Activated T-helper 2 cell treated with anti-CD3 and anti-CD28 coated beads, Interferon-gamma antibody, Interleukin-2, Interleukin-4, amounts not matched to agents 10 μg/mL and 5 μg/mL and 100 μg/mL, durations not matched to agents 14 hours and 24 hours and 36 hours (primary cell): ENCODE measurements at regions of chr16 and their contacts with region 1.

Region 1: GRCh38 chr16:57300387-57301125 is 16.1 kb upstream of the PLLP start:
- DNase-seq: peak; percentile 99
- H3K4me3 Mint-ChIP-seq: no peak overlapping the region
- H3K27ac Mint-ChIP-seq: no peak overlapping the region
- H3K4me1 Mint-ChIP-seq: peaks cover 16% of the 10 kb centered on the region
- H3K27me3 Mint-ChIP-seq: peaks cover 2% of the 10 kb centered on the region

Region 2: GRCh38 chr16:57185944-57186871 is 114.3 kb before region 1 on chr16 and contains the starts of genes PSME3IP1 and RSPRY1:
- intact Hi-C with region 1: loop called (anchors 5 kb)
- DNase-seq: peak; percentile 99
- H3K4me3 Mint-ChIP-seq: peak within 1 kb of the TSS; percentile 98
- H3K27ac Mint-ChIP-seq: peak within 1 kb of the TSS; percentile 96
- H3K4me1 Mint-ChIP-seq: peaks cover 36% of the 10 kb centered on the region
- H3K27me3 Mint-ChIP-seq: no peaks in the 10 kb centered on the region
- total RNA-seq, gene PSME3IP1: 109 and 125 TPM in 2 replicates
- total RNA-seq, gene RSPRY1: 33.3 and 43.0 TPM in 2 replicates

Region 3: DNA sequence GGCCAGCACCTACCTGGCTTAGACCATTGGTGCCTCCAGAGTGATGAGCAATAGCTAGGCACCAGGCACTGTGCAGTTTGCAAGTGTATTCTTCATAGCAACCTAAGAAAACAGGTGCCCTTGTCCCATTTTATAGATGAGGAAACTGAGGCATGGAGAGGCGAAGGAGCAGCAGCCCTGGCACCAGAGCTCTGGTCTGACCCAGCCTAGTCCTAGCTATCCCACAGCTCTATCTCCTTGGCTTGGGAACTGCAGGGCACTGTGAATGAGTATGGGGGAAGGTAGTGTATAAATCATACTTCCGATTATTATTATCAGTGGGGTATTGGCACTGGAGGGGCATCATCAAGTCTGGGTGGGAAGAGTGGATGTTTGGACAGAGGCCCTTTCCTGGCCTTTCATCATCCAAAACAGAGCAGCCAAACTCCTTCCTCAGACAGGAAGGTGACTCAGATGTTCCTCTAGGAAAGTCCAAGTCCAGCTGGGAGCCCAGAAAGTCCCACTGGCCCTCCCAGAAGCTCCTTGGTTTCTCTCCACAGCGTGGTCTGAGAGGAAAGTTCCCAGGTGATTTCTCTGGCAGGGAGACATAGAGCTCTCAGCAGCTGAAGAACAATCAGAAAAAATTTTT is 15.9 kb after region 1 on chr16:
- intact Hi-C with region 1: no loop called
- DNase-seq: no peak
- H3K4me3 Mint-ChIP-seq: no peak overlapping the region
- H3K27ac Mint-ChIP-seq: no peak overlapping the region
- H3K4me1 Mint-ChIP-seq: peaks cover 14% of the 10 kb centered on the region
- H3K27me3 Mint-ChIP-seq: peaks cover 3% of the 10 kb centered on the region

Region 4: DNA sequence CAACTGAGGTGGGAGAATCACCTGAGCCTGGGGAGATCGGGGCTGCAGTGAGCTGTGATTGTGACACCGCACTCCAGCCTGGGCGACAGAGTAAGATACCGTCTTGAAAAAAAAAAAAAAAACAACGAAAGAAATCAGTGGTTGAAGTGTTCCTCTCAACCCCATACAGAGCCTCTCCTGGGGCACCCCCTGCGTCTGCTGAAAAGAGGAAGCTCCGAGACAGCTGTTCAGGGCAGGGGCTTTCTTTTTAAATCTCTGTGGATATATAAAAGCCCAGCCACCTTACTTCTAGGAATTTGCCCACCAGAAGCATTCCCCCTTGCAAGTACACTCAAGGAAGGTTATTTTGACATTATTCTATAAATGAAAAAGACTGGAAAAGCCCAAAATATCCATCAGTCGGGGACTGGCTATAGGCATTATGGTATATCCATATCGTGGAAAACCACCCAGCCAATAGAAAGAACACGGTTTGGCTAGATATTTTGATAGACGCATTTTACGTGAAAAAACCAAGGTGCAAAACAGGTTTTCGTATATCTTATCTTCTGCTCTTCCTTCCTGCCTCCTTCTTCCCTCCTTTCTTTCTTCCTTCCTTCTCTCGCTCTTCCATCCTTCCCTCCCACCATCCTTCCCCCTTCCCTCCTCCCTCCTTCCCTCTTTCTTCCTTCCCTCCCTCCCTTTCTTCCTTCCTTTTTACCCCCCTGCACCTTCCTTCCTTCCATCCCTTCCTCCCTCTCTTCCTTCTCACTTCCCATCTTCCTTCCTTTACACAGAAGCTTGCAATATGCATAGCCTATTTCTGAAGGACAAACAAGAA is 48.9 kb after region 1 on chr16:
- intact Hi-C with region 1: no loop called
- DNase-seq: no peak
- H3K4me3 Mint-ChIP-seq: no peak overlapping the region
- H3K27ac Mint-ChIP-seq: no peak overlapping the region
- H3K4me1 Mint-ChIP-seq: peaks cover 10% of the 10 kb centered on the region
- H3K27me3 Mint-ChIP-seq: peaks cover 42% of the 10 kb centered on the region

Region 5: DNA sequence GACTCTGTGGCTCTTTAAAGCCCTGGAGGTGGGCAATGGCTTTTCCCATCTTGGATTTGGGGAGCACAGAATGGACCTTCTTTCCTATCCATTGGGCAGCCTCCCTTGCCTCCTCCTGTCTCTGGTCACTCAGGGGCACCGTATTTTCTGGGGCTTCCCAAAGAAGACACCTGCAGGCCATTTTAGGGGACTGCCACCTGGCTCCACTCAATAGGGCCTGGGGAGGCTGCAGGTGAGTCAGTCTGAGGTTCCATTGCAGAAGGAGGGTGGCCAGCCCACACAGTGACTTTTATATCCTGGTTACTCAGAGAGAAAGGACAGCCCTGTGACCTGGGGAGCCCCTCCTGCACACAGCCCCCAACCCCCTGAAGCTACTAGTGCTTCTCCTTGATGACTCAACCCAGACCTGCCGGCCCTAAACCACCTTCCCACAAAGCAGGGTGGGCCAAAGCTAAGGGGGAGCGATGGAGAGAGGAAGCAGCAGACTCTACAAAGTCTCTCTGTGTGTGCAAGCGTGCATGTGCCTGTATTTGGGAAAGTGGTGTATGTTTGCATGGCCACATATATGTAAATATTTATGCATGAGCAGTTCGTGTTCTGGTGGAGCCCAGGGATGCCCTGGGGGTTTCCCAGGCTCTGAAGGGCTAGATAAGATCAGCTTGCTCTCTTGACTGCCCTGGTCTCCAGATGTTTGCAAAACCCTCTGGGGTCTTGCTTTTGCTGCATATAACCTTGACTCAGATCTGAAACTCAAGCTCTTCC is 76.7 kb after region 1 on chr16:
- intact Hi-C with region 1: loop called (anchors 1 kb)
- DNase-seq: no peak
- H3K4me3 Mint-ChIP-seq: no peak overlapping the region
- H3K27ac Mint-ChIP-seq: peak overlapping the region; percentile 68
- H3K4me1 Mint-ChIP-seq: peaks cover 19% of the 10 kb centered on the region
- H3K27me3 Mint-ChIP-seq: no peaks in the 10 kb centered on the region

Region 6: DNA sequence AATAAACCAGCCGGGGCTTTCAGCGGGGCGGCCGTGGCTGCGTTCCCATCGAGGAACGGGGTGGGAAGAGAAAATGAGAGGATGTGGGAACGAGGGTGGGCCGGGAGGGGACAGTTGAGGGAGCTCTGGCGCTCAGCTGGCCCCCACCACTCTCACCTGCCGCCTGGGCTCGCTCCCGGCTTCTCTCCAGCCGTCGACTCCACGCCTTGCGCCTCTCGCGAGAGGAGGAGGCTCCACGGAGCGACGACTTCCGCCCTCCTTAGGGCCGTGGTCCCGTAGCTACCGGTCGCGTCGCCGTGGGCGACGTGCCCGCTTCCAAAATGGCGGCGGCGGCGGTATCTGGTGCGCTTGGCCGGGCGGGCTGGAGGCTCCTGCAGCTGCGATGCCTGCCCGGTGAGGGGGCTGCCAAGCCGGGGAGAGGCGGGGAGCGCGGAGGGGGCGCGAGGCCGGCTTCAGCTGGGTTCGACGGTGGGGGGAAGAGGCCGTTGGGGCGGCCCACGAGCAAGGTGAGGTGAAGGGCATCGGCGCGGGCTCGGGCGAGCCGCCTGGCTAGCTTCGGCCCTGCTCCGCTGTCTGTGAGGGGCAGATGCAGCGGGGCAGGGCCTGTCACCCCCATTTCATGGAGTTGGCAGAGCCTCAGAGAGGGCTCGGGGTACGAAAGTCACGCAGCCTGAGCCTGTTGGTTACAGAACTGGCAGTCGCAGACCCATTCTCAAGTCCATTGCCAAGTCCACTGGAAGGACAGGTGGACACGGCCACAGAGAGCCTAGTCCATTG is 146.8 kb after region 1 on chr16 and contains the starts of genes CIAPIN1 and COQ9:
- intact Hi-C with region 1: loop called (anchors 1 kb)
- DNase-seq: peak; percentile 87
- H3K4me3 Mint-ChIP-seq: peak within 1 kb of the TSS; percentile 93
- H3K27ac Mint-ChIP-seq: peak within 1 kb of the TSS; percentile 87
- H3K4me1 Mint-ChIP-seq: peaks cover 26% of the 10 kb centered on the region
- H3K27me3 Mint-ChIP-seq: no peaks in the 10 kb centered on the region
- total RNA-seq, gene CIAPIN1: 66.8 and 73.1 TPM in 2 replicates
- total RNA-seq, gene COQ9: 47.4 and 48.3 TPM in 2 replicates

Region 7: GRCh38 chr16:57535680-57536305 is 235.2 kb after region 1 on chr16:
- intact Hi-C with region 1: loop called (anchors 5 kb)
- DNase-seq: peak; percentile 89
- H3K4me3 Mint-ChIP-seq: peak overlapping the region; percentile 79
- H3K27ac Mint-ChIP-seq: peak overlapping the region; percentile 82
- H3K4me1 Mint-ChIP-seq: peaks cover 63% of the 10 kb centered on the region
- H3K27me3 Mint-ChIP-seq: no peaks in the 10 kb centered on the region